Natural killer cell (primary cell): ENCODE measurements at regions of chr11 and their contacts with region 1.

Region 1: DNA sequence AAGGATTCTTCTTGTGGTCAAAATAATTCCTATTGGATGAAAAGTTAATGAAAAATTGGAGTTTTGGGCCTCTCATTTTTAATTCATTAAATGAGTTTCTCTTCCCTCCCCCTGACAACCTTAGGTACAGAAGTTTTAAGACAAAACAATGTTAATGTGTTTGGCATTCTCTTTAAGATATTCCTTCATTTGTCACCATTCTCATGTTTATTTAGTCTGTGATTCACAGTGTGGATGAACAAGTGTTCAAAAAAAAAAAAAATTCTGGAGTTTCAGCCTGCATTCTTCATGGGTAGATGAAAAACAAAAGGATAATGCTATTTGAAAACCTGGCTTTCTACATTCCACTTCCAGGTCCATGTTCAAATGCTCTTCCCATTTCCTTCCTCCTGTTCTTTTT is 172.6 kb upstream of the LUZP2 start:
- DNase-seq: no peak
- ATAC-seq: no peak
- H3K4me3 ChIP-seq: no peak overlapping the region
- H3K4me3 Mint-ChIP-seq: no peak overlapping the region
- H3K27ac ChIP-seq: no peak overlapping the region
- H3K27ac Mint-ChIP-seq: no peak overlapping the region
- H3K4me1 ChIP-seq: peaks cover 2% of the 10 kb centered on the region
- H3K4me1 Mint-ChIP-seq: peaks cover 11 to 12% of the 10 kb centered on the region in 2 donors
- H3K27me3 ChIP-seq: no peaks in the 10 kb centered on the region
- H3K27me3 Mint-ChIP-seq: no peaks in the 10 kb centered on the region
- CTCF ChIP-seq: no peak

Region 2: DNA sequence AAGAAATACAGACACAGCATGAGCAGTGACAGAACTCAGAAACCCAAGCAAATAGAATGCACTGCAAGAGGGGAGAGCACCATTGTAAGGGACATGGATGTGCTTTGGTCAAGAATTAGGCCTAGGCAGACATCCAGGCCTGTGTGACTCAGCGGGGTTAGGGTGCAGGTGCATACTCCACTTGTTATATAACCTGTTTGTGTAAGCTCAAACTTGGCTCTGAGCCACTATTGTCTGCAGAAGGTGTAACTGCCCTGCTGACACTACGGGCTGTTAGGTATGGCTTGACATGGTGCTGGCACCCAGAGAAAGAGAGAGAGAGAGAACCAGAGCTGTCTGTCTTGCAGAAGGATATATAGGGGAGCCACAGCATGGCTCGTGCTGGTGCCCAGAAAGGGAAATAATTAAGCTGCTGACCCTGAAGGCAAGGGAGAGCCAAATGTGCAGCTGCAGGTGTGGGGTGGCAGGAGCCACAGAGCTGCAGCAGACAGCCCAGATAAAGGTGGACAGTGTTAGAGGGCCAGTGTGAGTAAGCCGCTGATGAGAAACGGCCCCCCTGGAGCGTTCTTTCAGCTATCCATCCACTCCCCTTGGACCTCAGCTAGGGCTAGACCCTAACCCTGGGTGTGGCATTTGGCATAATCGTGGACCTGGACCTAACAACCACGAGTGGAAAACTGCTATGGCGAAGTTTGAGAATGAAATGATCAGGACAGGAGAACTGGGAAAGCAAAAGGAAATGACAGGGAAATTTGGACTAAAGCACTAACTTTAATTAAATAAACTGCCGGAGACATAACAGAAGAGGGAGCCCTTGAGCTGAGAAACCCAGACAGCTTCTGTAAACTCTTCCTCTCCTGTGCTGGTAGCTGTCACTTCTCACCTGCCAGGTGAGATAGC is 1211.0 kb before region 1 on chr11:
- intact Hi-C with region 1: loop called (anchors 5 kb)
- DNase-seq: peak in 1 of 2 donors; percentile 7
- ATAC-seq: peak; percentile 37 to 71 (median 68)
- H3K4me3 ChIP-seq: no peak overlapping the region
- H3K4me3 Mint-ChIP-seq: no peak overlapping the region
- H3K27ac ChIP-seq: no peak overlapping the region
- H3K27ac Mint-ChIP-seq: no peak overlapping the region
- H3K4me1 ChIP-seq: peaks cover 8% of the 10 kb centered on the region
- H3K4me1 Mint-ChIP-seq: peaks cover 19 to 21% of the 10 kb centered on the region in 2 donors
- H3K27me3 ChIP-seq: no peaks in the 10 kb centered on the region
- H3K27me3 Mint-ChIP-seq: no peaks in the 10 kb centered on the region
- CTCF ChIP-seq: peak; percentile 79

Region 3: DNA sequence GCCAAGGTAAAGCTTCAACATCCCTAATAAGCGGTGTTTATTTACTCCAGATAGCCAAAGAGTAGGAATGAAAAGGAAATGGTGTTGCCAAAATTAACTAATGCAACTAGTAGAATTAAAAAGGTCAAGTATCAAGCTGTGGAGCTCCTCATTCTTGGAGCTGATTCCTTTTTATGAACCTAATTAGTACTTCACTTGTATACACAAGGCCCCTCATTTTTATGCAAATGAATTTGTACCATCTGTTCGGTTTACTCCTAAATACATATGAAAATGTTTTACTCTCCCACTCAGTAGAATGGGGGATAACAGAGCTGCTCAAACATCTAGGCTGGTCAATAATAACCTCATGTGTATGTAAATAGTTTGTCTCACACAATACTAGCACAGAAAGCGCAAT is 253.8 kb before region 1 on chr11:
- intact Hi-C with region 1: no loop called
- DNase-seq: no peak
- ATAC-seq: no peak
- H3K4me3 ChIP-seq: no peak overlapping the region
- H3K4me3 Mint-ChIP-seq: no peak overlapping the region
- H3K27ac ChIP-seq: no peak overlapping the region
- H3K27ac Mint-ChIP-seq: no peak overlapping the region
- H3K4me1 ChIP-seq: no peaks in the 10 kb centered on the region
- H3K4me1 Mint-ChIP-seq: no peaks in the 10 kb centered on the region
- H3K27me3 ChIP-seq: no peaks in the 10 kb centered on the region
- H3K27me3 Mint-ChIP-seq: no peaks in the 10 kb centered on the region
- CTCF ChIP-seq: no peak

Region 4: DNA sequence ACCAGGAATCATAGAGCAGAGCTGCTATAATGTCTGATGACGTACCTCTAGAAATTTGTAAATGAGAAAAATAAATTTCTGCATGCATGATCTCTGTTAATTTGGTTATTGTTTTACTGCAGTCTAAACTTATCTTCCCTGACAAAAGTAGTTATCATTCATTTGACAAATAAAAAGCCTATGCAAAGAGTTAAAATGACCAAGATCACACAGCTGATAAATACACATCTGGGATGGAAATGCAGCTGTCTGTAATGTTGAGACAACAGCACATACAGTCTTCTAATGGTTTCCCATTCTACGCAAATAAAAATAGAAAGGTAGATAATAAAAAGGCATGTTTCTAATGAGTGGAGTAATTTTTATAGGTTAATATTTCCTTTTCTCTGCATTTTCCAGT is 52.4 kb before region 1 on chr11:
- intact Hi-C with region 1: no loop called
- DNase-seq: no peak
- ATAC-seq: no peak
- H3K4me3 ChIP-seq: no peak overlapping the region
- H3K4me3 Mint-ChIP-seq: no peak overlapping the region
- H3K27ac ChIP-seq: no peak overlapping the region
- H3K27ac Mint-ChIP-seq: no peak overlapping the region
- H3K4me1 ChIP-seq: no peaks in the 10 kb centered on the region
- H3K4me1 Mint-ChIP-seq: peaks cover 0 to 5% of the 10 kb centered on the region in 2 donors
- H3K27me3 ChIP-seq: no peaks in the 10 kb centered on the region
- H3K27me3 Mint-ChIP-seq: no peaks in the 10 kb centered on the region
- CTCF ChIP-seq: no peak

Region 5: DNA sequence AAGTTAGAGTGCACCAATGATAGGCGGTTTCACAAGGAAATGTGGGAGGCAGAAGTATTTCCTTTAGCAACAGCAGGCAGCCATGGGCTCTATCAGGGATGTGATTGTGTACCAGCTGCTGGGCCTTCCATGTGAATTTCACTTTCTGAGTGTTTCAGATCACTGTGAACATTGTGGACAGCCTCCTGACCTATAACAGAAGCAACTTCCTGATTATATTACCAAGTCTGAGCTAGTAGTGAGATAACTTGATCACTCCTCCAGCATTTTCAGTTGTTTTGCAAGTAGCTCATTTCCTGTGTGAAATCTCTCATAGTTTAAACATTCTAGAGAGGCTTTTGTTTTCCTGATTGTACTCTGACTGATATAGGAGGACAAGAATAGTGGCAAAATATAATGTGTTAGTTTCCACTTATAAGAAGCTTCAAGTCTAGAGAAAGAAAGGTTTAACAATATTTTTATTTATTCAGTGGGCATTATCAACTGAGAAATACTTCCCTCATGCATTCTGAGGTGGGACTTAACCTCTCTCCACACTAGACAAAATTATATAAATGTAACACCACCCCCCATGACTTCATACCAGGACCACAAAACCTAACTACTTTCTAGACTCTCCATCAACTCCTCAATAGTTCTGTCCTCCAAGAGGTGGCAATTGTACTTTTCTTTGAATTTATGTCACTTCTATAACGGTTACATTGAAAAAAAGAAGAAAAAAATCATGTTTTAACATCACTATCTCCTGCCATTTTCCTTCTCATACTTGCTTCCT is 11.6 kb before region 1 on chr11:
- intact Hi-C with region 1: no loop called
- DNase-seq: peak in 1 of 2 donors; percentile 11
- ATAC-seq: peak; percentile 91 to 94 (median 92)
- H3K4me3 ChIP-seq: no peak overlapping the region
- H3K4me3 Mint-ChIP-seq: peak overlapping the region; percentile 86
- H3K27ac ChIP-seq: peak overlapping the region; percentile 77
- H3K27ac Mint-ChIP-seq: peak overlapping the region; percentile 85 to 88
- H3K4me1 ChIP-seq: no peaks in the 10 kb centered on the region
- H3K4me1 Mint-ChIP-seq: peaks cover 25 to 31% of the 10 kb centered on the region in 2 donors
- H3K27me3 ChIP-seq: no peaks in the 10 kb centered on the region
- H3K27me3 Mint-ChIP-seq: no peaks in the 10 kb centered on the region
- CTCF ChIP-seq: no peak

Region 6: DNA sequence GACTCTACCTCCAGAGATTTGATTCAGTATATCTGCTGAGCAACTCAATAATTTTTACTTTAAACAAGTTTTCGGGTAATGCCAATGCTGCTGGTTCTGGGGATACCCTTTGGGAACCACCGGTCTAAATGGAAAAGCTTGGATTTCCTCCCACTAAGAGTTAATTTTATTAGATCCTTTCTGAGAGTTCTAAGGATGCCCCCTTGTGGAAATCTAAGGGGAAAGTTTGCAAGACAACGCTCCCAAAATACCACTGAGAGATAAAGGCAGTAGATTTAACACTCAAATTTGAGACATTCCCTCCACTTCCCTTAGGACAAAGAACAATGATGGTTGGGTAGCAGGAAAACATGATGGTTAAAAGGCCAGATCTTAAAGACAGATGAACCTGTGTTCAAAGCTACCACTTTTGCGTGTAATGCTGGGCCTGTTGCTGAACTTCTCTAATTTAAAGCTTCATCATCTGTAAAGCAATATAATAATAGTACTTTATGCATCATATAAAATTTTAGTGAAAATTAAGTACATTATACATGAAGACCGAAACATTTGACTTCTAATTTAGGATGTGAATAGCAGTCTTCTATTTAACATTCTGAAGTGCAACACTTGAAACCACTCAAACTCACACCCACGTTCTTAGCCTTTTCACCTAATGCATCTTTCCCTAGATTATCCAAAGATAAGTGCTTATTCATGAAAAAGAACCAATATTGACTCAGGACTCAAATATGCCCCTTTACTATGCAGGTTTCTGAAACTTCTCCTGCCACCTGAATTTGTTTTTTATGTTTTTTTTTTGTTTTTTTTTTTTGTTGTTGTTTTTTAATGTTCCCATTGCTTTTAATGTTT is 62.6 kb after region 1 on chr11:
- intact Hi-C with region 1: no loop called
- DNase-seq: no peak
- ATAC-seq: no peak
- H3K4me3 ChIP-seq: no peak overlapping the region
- H3K4me3 Mint-ChIP-seq: no peak overlapping the region
- H3K27ac ChIP-seq: no peak overlapping the region
- H3K27ac Mint-ChIP-seq: no peak overlapping the region
- H3K4me1 ChIP-seq: no peaks in the 10 kb centered on the region
- H3K4me1 Mint-ChIP-seq: peaks cover 5 to 12% of the 10 kb centered on the region in 2 donors
- H3K27me3 ChIP-seq: no peaks in the 10 kb centered on the region
- H3K27me3 Mint-ChIP-seq: no peaks in the 10 kb centered on the region
- CTCF ChIP-seq: peak; percentile 49